Activated CD8-positive, alpha-beta T cell treated with anti-CD3 and anti-CD28 coated beads for 36 hours (primary cell): ENCODE measurements at regions of chr11 and their contacts with region 1.

Region 1: DNA sequence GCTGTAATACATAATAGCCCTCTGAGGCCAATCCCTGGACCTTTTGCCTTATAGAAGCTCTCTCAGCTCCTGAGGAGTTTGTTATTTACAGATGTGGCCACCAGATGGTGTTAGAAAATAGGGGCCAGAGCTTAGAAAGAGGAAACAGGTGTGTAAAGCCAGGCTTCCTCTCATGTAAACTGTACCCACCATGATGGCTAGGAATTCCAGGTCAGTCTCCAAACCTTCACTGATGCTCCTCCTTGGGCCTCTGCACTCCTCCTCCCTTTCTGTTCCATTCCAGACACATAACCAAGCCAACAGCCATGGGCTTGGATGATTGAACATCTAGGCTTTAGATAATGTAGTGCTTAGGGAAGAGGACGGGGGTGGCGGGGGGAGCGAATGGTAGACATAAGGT is 39.7 kb downstream of the USP35 start:
- DNase-seq: peak; percentile 28
- ATAC-seq: no peak
- H3K4me3 Mint-ChIP-seq: no peak overlapping the region
- H3K27ac Mint-ChIP-seq: no peak overlapping the region
- H3K4me1 Mint-ChIP-seq: peaks cover 8% of the 10 kb centered on the region
- H3K27me3 Mint-ChIP-seq: no peaks in the 10 kb centered on the region
- CTCF ChIP-seq: peak; percentile 53

Region 2: DNA sequence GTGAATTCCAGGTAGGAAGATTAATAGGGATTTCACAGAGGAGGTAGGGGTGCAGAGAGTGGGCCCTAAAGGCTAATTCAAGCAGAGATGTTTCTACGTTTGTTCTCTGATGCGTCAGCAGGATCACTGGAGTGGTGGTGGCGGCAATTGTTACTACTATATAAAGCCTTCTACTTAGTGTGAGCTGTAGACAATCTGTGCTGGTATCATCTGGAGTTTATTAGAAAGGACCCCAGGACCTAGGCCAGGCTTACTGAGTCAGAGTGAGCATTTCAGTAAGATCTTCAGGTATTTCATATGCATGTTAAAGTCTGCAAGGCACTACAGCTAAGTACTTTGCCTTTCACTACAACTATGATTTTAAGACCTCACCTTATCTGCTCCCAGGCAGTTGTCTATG is 19.7 kb after region 1 on chr11:
- CTCF ChIA-PET with region 1: interaction called, 11 read pairs
- POLR2A ChIA-PET with region 1: no interaction called
- intact Hi-C with region 1: no loop called
- DNase-seq: no peak
- ATAC-seq: no peak
- H3K4me3 Mint-ChIP-seq: no peak overlapping the region
- H3K27ac Mint-ChIP-seq: no peak overlapping the region
- H3K4me1 Mint-ChIP-seq: peaks cover 2% of the 10 kb centered on the region
- H3K27me3 Mint-ChIP-seq: no peaks in the 10 kb centered on the region
- CTCF ChIP-seq: no peak

Region 3: GRCh38 chr11:78289552-78290292 is 61.3 kb after region 1 on chr11:
- CTCF ChIA-PET with region 1: interaction called, 3 read pairs
- POLR2A ChIA-PET with region 1: no interaction called
- intact Hi-C with region 1: loop called (anchors 10 kb)
- DNase-seq: no peak
- ATAC-seq: no peak
- H3K4me3 Mint-ChIP-seq: no peak overlapping the region
- H3K27ac Mint-ChIP-seq: peak overlapping the region; percentile 31
- H3K4me1 Mint-ChIP-seq: peaks cover 29% of the 10 kb centered on the region
- H3K27me3 Mint-ChIP-seq: no peaks in the 10 kb centered on the region
- CTCF ChIP-seq: no peak

Region 4: GRCh38 chr11:78416305-78417178 is 188.1 kb after region 1 on chr11:
- CTCF ChIA-PET with region 1: interaction called, 6 read pairs
- POLR2A ChIA-PET with region 1: no interaction called
- intact Hi-C with region 1: loop called (anchors 10 kb)
- DNase-seq: peak; percentile 86
- ATAC-seq: peak; percentile 76
- H3K4me3 Mint-ChIP-seq: peak overlapping the region; percentile 71
- H3K27ac Mint-ChIP-seq: peak overlapping the region; percentile 37
- H3K4me1 Mint-ChIP-seq: peaks cover 26% of the 10 kb centered on the region
- H3K27me3 Mint-ChIP-seq: peaks cover 29% of the 10 kb centered on the region
- CTCF ChIP-seq: peak; percentile 69